ENCODE measurements at regions of chrX and their contacts with region 1.

Region 1: DNA sequence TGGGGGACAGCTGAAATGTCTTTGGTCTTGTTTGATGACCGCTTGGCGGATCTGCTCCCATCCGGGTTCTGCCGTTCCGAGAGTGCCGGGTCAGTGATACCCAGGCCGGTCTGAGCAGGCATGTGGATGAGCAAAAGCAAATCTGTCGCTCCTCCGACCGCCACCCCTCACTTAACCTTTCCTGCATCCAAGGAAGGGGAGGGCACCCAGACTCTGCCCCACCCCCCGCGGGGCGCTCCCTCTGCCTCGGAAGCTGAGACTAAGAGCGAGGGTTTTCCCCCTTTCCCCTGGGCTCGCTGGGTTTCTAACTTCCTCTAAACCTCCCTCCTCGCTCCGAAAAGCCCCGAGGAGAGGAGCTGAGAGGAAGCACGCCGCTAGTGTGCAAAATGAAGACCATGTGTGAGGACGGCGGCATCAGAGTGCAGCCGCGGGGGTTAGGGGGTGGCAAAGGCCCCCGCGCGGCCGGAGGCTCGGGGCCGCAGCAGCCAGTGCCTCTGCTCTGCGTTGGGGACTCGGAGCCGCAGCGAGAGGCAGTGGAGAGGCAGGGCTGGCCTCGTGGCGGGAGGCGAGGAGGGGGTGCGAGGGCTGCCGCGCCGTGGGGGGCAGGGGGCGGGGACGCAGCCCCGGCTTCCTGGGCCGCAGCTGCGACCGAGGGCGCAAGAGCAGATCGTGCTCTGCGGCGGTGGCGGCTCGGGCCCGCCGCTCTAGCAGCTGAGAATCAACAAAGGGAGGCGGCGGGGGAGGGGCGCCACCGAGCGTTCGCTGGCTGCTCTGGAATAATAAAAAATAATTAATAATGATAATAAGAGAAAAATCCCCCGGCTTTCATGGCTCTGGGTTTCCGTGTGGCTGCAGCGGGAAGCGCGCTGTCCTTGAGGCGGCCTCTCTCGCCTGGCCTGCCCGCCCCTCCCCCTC is 55.8 kb upstream of the BCOR start:
- DNase-seq: peak; percentile 48 to 70
- ATAC-seq: peak; percentile 9 to 38 (median 27)
- H3K4me3 ChIP-seq: peak overlapping the region; percentile 59
- H3K27ac ChIP-seq: peak overlapping the region; percentile 74
- H3K4me1 ChIP-seq: peaks cover 12% of the 10 kb centered on the region
- H3K27me3 ChIP-seq: peaks cover 0 to 84% (median 0%) of the 10 kb centered on the region in 3 donors
- CTCF ChIP-seq: peak; percentile 13

Region 2: GRCh38 chrX:39814391-39814790 is 339.2 kb before region 1 on chrX:
- intact Hi-C with region 1: loop called in 1 of 2 experiments (anchors 5 kb)
- DNase-seq: peak in 1 of 2 donors; percentile 44
- ATAC-seq: peak; percentile 50 to 70 (median 56)
- H3K4me3 ChIP-seq: no peak overlapping the region
- H3K27ac ChIP-seq: peak overlapping the region; percentile 27
- H3K4me1 ChIP-seq: no peaks in the 10 kb centered on the region
- H3K27me3 ChIP-seq: peaks cover 0 to 15% (median 0%) of the 10 kb centered on the region in 3 donors
- CTCF ChIP-seq: peak; percentile 39

Region 3: GRCh38 chrX:39907964-39908616 is 245.5 kb before region 1 on chrX:
- intact Hi-C with region 1: loop called in 1 of 2 experiments (anchors 10 kb)
- DNase-seq: peak; percentile 73 to 84
- ATAC-seq: peak; percentile 92 to 96 (median 93)
- H3K4me3 ChIP-seq: peak overlapping the region; percentile 16
- H3K27ac ChIP-seq: peak overlapping the region; percentile 73
- H3K4me1 ChIP-seq: no peaks in the 10 kb centered on the region
- H3K27me3 ChIP-seq: peaks cover 0 to 13% (median 0%) of the 10 kb centered on the region in 3 donors
- CTCF ChIP-seq: no peak

Region 4: DNA sequence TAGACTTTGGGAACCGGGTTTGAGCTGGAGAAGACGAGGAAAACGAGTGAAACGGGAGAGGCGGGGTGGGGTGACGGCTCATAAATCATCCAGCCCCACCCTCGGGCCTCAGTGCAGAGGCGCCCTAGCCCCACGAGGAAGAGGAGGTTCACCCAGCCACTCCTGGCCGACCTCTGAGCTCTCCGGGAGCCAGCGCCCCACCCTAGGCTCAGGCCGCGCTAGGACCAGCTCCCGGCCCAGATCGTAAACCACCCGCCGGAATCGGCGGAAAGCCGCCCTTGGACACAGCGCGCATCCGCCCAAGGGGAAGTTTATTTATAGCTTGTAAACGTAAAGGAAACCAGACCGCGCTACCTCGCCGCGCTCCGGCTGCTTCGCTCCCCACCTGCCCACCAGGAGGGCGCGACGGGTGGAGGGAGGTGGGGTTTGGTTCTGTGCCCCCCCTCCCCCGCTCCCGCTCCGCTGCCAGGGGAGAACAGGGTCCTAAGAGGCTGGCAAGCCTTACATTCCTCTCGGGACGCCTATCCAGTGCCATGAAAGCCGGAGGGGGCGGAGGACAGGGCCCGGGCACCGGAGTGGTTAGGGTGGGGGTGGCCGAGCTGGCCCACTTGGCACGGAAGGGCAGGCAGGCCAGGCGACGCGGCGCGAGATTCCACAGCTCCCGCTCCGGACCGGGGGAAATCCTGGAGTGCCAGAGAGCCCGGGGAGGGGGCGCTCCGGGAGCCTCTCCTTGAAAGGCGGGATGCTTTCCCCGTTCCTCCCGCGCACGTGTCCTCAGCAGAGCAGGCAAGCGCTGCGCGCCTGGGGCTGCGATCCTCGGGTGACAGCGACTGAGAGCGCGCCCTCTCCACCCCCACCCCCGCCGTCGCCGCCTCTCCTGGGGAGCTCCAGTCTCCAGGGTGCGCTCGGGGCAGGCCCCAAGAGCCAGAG is 140.1 kb before region 1 on chrX:
- intact Hi-C with region 1: loop called (anchors 2 to 10 kb)
- DNase-seq: peak; percentile 68 to 85
- ATAC-seq: peak; percentile 68 to 73 (median 72)
- H3K4me3 ChIP-seq: peak overlapping the region; percentile 72
- H3K27ac ChIP-seq: peak overlapping the region; percentile 92
- H3K4me1 ChIP-seq: peaks cover 6% of the 10 kb centered on the region
- H3K27me3 ChIP-seq: peaks cover 0 to 70% (median 0%) of the 10 kb centered on the region in 3 donors
- CTCF ChIP-seq: no peak

Region 5: GRCh38 chrX:40097497-40098263 is 55.9 kb before region 1 on chrX and contains the start of gene BCOR:
- intact Hi-C with region 1: loop called (anchors 2 to 5 kb)
- DNase-seq: peak; percentile 75 to 89
- ATAC-seq: peak; percentile 62 to 64 (median 63)
- H3K4me3 ChIP-seq: peak within 1 kb of the TSS; percentile 78
- H3K27ac ChIP-seq: peak within 1 kb of the TSS; percentile 91
- H3K4me1 ChIP-seq: peaks cover 10% of the 10 kb centered on the region
- H3K27me3 ChIP-seq: peaks cover 0 to 88% (median 0%) of the 10 kb centered on the region in 3 donors
- CTCF ChIP-seq: peak; percentile 5
- total RNA-seq, gene BCOR: 18.3 to 24.3 (median 19.6) TPM

Region 6: GRCh38 chrX:40108959-40109287 is 44.7 kb before region 1 on chrX:
- intact Hi-C with region 1: loop called (anchors 1 to 5 kb)
- DNase-seq: peak; percentile 84 to 91
- ATAC-seq: peak; percentile 70 to 78 (median 72)
- H3K4me3 ChIP-seq: peak overlapping the region; percentile 67
- H3K27ac ChIP-seq: peak overlapping the region; percentile 93
- H3K4me1 ChIP-seq: peaks cover 23% of the 10 kb centered on the region
- H3K27me3 ChIP-seq: peaks cover 0 to 68% (median 0%) of the 10 kb centered on the region in 3 donors
- CTCF ChIP-seq: no peak

Region 7: GRCh38 chrX:40120838-40121682 is 32.5 kb before region 1 on chrX:
- intact Hi-C with region 1: no loop called
- DNase-seq: no peak
- ATAC-seq: no peak
- H3K4me3 ChIP-seq: no peak overlapping the region
- H3K27ac ChIP-seq: no peak overlapping the region
- H3K4me1 ChIP-seq: no peaks in the 10 kb centered on the region
- H3K27me3 ChIP-seq: peaks cover 0 to 19% (median 0%) of the 10 kb centered on the region in 3 donors
- CTCF ChIP-seq: no peak

Region 8: DNA sequence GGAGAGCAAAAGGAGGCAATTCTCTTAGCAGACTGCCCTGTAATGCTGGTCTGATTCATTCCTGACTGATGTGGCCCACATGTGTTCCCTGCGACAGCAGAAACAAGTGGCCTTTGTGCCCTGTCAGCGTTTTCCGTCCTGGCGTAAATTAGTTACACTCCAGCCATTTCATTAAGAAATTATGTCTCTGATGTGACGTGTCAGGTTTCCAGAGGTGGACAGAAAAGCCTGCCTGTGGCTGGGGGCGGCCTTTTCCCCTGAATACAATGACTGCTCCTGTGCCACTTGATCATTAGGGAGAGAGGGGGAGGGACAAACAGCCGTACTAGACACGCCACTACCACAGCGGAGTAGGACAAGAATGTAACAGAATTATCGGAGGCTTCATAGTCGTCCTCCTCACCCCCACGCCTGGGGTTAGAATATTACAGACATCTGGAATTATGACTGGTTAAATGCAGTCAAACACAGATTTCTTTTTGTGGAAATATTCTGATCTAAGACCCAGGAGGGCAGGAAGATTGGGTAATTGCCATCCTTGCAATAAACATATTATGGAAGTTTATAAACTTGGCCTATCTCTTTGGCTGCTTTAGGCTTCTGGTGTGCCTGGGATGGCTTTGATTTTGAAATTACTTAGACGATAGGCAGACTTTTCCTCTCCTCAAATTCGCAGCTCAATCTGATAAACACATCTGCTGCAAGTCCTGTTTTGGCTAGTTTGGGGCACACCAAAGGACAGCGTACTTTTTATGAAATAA is 90.3 kb after region 1 on chrX:
- intact Hi-C with region 1: no loop called
- DNase-seq: no peak
- ATAC-seq: no peak
- H3K4me3 ChIP-seq: no peak overlapping the region
- H3K27ac ChIP-seq: no peak overlapping the region
- H3K4me1 ChIP-seq: no peaks in the 10 kb centered on the region
- H3K27me3 ChIP-seq: peaks cover 0 to 13% (median 0%) of the 10 kb centered on the region in 3 donors
- CTCF ChIP-seq: no peak